Esophagus squamous epithelium (tissue), 5 donors: ENCODE measurements at regions of chr11 and their contacts with region 1.

Region 1: GRCh38 chr11:85694386-85694980 is 8.5 kb upstream of the CCDC89 start:
- DNase-seq: no peak
- H3K4me3 ChIP-seq: no peak overlapping the region
- H3K27ac ChIP-seq: no peak overlapping the region
- H3K4me1 ChIP-seq: peaks cover 0 to 3% (median 0%) of the 10 kb centered on the region in 3 donors
- H3K27me3 ChIP-seq: no peaks in the 10 kb centered on the region
- CTCF ChIP-seq: peak in 4 of 6 experiments; percentile 29 to 48 (median 40)
- POLR2A ChIP-seq: no peak

Region 2: GRCh38 chr11:85831017-85831443 is 136.5 kb after region 1 on chr11:
- intact Hi-C with region 1: loop called (anchors 10 kb)
- DNase-seq: no peak
- H3K4me3 ChIP-seq: no peak overlapping the region
- H3K27ac ChIP-seq: no peak overlapping the region
- H3K4me1 ChIP-seq: peaks cover 9 to 31% (median 16%) of the 10 kb centered on the region in 3 donors
- H3K27me3 ChIP-seq: no peaks in the 10 kb centered on the region
- CTCF ChIP-seq: no peak
- POLR2A ChIP-seq: no peak

Region 3: DNA sequence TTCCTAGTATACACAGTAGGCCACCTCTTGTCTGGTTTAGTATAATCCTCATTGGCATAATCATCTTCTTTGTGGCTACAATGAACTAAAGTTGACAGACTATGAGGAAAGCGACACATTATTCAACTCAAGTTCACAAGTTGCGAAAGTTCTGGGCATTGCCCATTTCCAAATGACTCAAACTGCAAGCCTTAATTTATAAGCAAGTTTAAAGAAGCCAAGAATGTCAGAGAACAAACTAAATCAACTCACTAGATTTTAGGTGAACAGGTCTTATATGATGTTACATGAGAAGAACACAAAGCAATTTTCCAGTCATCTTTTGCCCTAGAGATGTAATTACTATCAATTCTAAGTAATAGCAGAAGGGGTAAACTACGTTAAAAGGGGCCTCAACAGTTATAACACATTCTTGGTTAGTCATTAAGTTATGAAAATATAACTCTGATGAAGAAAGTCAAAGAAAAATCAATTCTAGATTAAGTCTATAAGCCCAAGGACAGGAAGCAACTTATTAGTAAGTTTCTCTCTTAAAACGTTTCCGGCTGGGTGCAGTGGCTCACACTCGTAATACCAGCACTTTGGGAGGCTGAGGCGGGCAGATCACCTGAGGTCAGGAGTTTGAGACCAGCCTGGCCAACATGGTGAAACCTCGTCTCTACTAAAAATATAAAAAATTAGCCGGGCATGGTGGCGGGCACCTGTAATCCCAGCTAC is 352.9 kb after region 1 on chr11:
- intact Hi-C with region 1: no loop called
- DNase-seq: no peak
- H3K4me3 ChIP-seq: no peak overlapping the region
- H3K27ac ChIP-seq: peak overlapping the region in 1 of 4 donors; percentile 18
- H3K4me1 ChIP-seq: peaks cover 5 to 95% (median 48%) of the 10 kb centered on the region in 3 donors
- H3K27me3 ChIP-seq: no peaks in the 10 kb centered on the region
- CTCF ChIP-seq: no peak
- POLR2A ChIP-seq: no peak